RWPE1 (cell line): ENCODE measurements at regions of chr10 and their contacts with region 1.

Region 1: GRCh38 chr10:70925377-70926225 is 37.2 kb upstream of the PCBD1 start:
- DNase-seq: peak; percentile 70
- H3K27ac ChIP-seq: no peak overlapping the region
- CTCF ChIP-seq: peak; percentile 95

Region 2: DNA sequence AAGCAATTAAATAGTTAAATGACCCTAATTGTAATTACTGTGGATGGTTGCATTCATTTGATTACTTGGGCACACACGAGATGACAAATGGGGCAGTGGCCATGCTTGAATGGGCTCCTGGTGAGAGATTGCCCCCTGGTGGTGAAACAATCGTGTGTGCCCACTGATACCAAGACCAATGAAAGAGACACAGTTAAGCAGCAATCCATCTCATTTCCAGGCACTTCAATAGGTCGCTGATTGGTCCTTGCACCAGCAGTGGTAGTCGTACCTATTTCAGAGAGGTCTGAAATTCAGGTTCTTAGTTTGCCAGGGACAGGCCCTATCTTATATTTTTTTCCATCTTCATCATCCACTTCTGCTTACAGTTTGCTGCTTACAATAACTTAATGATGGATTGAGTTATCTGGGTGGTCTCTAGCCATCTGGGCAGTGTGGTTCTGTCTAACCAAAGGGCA is 45.5 kb before region 1 on chr10:
- CTCF ChIA-PET with region 1: no interaction called
- POLR2A ChIA-PET with region 1: no interaction called
- DNase-seq: peak; percentile 78
- H3K27ac ChIP-seq: no peak overlapping the region
- CTCF ChIP-seq: peak; percentile 88

Region 3: GRCh38 chr10:70943841-70944466 is 18.4 kb after region 1 on chr10:
- CTCF ChIA-PET with region 1: interaction called, 11 read pairs
- POLR2A ChIA-PET with region 1: no interaction called
- DNase-seq: no peak
- H3K27ac ChIP-seq: no peak overlapping the region
- CTCF ChIP-seq: no peak